Heart left ventricle (tissue), 16 donors: ENCODE measurements at regions of chr22 and their contacts with region 1.

Region 1: GRCh38 chr22:36253518-36254490 is 871 bp downstream of the APOL1 start:
- DNase-seq: peak in 2 of 5 donors; percentile 35 to 49
- ATAC-seq: peak in 2 of 4 donors; percentile 15 to 24
- H3K4me3 ChIP-seq: peak overlapping the region; percentile 19 to 79 (median 57)
- H3K27ac ChIP-seq: peak overlapping the region; percentile 63 to 96 (median 90)
- H3K4me1 ChIP-seq: peaks cover 0 to 60% (median 38%) of the 10 kb centered on the region in 12 donors
- H3K27me3 ChIP-seq: no peaks in the 10 kb centered on the region
- CTCF ChIP-seq: no peak
- POLR2A ChIP-seq: no peak

Region 2: DNA sequence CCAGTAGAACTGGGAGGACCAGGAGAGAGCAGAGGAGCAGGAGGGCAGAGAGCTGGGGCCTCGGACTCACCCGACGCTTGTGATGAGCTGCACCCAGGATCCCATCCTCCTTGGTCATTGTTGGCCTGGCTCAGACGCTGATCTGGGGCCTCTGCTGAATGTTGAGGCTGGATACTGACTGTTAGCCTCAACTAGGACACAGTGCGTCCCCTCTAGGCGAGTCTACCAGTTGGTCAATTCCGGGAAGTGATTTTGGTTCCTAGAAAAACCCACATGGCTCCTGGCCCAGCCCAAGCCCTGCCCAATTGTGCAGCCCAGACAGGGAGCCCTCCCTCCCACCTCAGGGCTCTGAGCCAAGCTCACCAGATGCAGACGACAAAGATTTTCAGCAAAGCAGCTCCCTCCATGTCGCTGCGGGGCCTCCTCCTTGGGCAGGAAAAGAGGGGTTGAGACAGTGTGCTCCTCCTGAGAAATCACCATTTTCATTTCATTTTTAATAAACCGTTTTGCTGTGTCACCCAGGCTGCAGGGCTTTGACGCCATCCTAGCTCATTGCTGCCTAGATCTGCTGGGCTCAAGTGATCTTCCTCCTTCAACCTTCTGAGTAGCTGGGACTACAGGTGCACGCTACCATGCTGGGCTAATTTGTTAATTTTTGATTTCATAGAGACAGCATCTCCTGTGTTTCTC is 52.0 kb before region 1 on chr22 and contains the start of gene APOL4:
- intact Hi-C with region 1: loop called in 1 of 10 experiments (anchors 2 kb)
- DNase-seq: peak; percentile 85 to 92 (median 88)
- ATAC-seq: peak; percentile 75 to 91 (median 84)
- H3K4me3 ChIP-seq: peak within 1 kb of the TSS in 10 of 12 donors; percentile 2 to 57 (median 44)
- H3K27ac ChIP-seq: peak within 1 kb of the TSS; percentile 44 to 95 (median 72)
- H3K4me1 ChIP-seq: peaks cover 0 to 70% (median 38%) of the 10 kb centered on the region in 12 donors
- H3K27me3 ChIP-seq: no peaks in the 10 kb centered on the region
- CTCF ChIP-seq: peak in 2 of 12 donors; percentile 6 to 22
- POLR2A ChIP-seq: peak in 1 of 2 donors; percentile 45
- total RNA-seq, gene APOL4: 1.7 to 26.5 (median 5.7) TPM in 7 of 9 donors, not detected in the others